PC-3 (cell line): ENCODE measurements at regions of chr14 and their contacts with region 1.

Region 1: GRCh38 chr14:74249433-74250375 is 10.5 kb downstream of the VSX2 start:
- DNase-seq: peak; percentile 29
- ATAC-seq: peak; percentile 41
- H3K4me3 ChIP-seq: no peak overlapping the region
- H3K27ac ChIP-seq: no peak overlapping the region
- H3K4me1 ChIP-seq: no peaks in the 10 kb centered on the region
- H3K27me3 ChIP-seq: no peaks in the 10 kb centered on the region
- CTCF ChIP-seq: no peak

Region 2: GRCh38 chr14:74062829-74063190 is 186.9 kb before region 1 on chr14:
- CTCF ChIA-PET with region 1: no interaction called
- POLR2A ChIA-PET with region 1: no interaction called
- intact Hi-C with region 1: no loop called
- DNase-seq: peak; percentile 68
- ATAC-seq: peak; percentile 70
- H3K4me3 ChIP-seq: no peak overlapping the region
- H3K27ac ChIP-seq: peak overlapping the region; percentile 58
- H3K4me1 ChIP-seq: peaks cover 27% of the 10 kb centered on the region
- H3K27me3 ChIP-seq: no peaks in the 10 kb centered on the region
- CTCF ChIP-seq: no peak

Region 3: GRCh38 chr14:74109369-74109768 is 140.3 kb before region 1 on chr14:
- CTCF ChIA-PET with region 1: no interaction called
- POLR2A ChIA-PET with region 1: no interaction called
- intact Hi-C with region 1: loop called (anchors 1 kb)
- DNase-seq: no peak
- ATAC-seq: no peak
- H3K4me3 ChIP-seq: no peak overlapping the region
- H3K27ac ChIP-seq: no peak overlapping the region
- H3K4me1 ChIP-seq: no peaks in the 10 kb centered on the region
- H3K27me3 ChIP-seq: no peaks in the 10 kb centered on the region
- CTCF ChIP-seq: no peak

Region 4: GRCh38 chr14:74217672-74218448 is 31.8 kb before region 1 on chr14:
- CTCF ChIA-PET with region 1: no interaction called
- POLR2A ChIA-PET with region 1: no interaction called
- intact Hi-C with region 1: loop called (anchors 2 kb)
- DNase-seq: peak; percentile 85
- ATAC-seq: peak; percentile 98
- H3K4me3 ChIP-seq: peak overlapping the region; percentile 52
- H3K27ac ChIP-seq: no peak overlapping the region
- H3K4me1 ChIP-seq: peaks cover 3% of the 10 kb centered on the region; the same call in 1 of the 2 replicates
- H3K27me3 ChIP-seq: no peaks in the 10 kb centered on the region
- CTCF ChIP-seq: peak; percentile 91

Region 5: DNA sequence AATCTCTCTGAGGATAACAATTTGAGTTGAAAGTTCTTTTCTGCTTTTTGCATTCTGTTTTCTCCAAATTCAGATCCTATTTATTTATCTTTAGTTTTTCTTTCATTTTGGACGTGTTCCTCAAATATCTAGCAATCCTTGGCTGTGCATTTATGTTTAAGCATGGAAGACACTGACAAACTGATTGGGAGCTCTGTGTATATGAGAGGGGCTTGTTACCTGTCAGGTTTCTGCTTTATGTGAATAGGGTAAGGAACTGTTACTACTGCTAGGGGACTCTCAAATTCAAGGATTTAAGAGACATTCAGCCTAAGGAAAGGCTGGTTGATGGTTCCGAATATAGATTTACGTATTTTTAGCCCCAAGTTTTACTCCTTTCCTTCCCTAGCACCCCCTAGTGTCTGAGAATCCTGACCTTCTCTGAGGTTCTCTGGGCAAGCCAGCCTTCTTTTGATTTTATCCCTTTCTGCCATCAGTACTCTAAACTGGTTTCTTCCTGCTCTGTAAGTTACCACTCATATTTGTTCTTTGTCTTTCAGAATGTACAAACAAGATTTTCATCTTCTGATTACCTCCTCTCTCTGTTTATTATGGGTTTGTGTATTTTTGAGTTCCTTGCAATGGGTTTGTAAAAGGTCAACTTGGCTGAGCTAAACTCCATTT is 543.9 kb after region 1 on chr14:
- CTCF ChIA-PET with region 1: no interaction called
- POLR2A ChIA-PET with region 1: no interaction called
- intact Hi-C with region 1: no loop called
- DNase-seq: peak; percentile 32
- ATAC-seq: no peak
- H3K4me3 ChIP-seq: no peak overlapping the region
- H3K27ac ChIP-seq: no peak overlapping the region
- H3K4me1 ChIP-seq: no peaks in the 10 kb centered on the region
- H3K27me3 ChIP-seq: no peaks in the 10 kb centered on the region
- CTCF ChIP-seq: peak; percentile 59